ENCODE measurements at regions of chr12 and their contacts with region 1.

Region 1: DNA sequence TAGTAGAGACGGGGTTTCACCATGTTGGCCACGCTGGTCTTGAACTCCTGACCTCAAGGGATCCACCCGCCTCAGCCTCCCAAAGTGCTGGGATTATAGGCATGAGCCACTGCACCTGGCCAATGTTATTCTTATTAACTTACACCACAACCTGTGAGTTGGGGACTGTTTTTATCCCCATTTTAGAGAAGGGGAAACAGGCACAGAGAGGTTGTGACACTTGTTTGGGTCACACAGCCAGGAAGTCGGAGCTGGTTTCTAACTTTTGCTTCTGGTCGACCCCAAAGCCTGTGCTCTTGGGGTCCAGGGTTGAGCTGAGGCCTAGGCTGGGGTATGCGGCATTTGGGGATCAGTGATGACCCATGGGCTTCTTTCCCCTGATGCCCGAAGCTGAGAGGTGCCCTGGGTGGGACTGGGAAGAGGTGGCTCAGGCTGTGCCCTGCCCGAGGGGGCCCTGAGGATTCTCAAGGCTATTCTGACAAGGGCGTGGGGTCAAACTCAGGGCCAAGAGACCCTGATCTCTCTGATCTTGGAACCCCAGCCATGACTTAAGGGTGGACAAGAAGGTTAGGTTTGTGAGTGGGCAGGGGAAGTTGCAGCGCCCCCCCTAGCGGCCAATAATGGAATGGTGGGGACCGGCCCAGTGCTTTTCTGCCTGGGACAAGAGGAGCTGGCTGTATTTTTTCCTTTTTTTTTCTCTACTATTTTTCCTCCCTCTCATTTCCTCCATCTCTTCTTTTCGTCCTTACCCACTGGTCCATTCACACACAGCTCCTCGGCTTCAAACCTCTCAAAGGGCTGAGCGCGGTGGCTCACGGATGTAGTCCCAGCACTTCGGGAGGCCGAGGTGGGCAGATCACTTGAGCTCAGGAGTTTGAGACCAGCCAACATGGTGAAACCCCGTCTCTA is 3.0 kb downstream of the SDSL start:
- DNase-seq: peak; percentile 62
- ATAC-seq: peak; percentile 67
- H3K4me3 Mint-ChIP-seq: no peak overlapping the region
- H3K27ac Mint-ChIP-seq: no peak overlapping the region
- H3K4me1 Mint-ChIP-seq: peaks cover 13% of the 10 kb centered on the region
- H3K27me3 Mint-ChIP-seq: peaks cover 17% of the 10 kb centered on the region

Region 2: GRCh38 chr12:113310489-113310888 is 114.7 kb before region 1 on chr12:
- CTCF ChIA-PET with region 1: interaction called, 10 read pairs
- DNase-seq: no peak
- ATAC-seq: no peak
- H3K4me3 Mint-ChIP-seq: no peak overlapping the region
- H3K27ac Mint-ChIP-seq: no peak overlapping the region
- H3K4me1 Mint-ChIP-seq: no peaks in the 10 kb centered on the region
- H3K27me3 Mint-ChIP-seq: no peaks in the 10 kb centered on the region

Region 3: GRCh38 chr12:113391145-113391544 is 34.0 kb before region 1 on chr12:
- CTCF ChIA-PET with region 1: no interaction called
- DNase-seq: no peak
- ATAC-seq: no peak
- H3K4me3 Mint-ChIP-seq: no peak overlapping the region
- H3K27ac Mint-ChIP-seq: no peak overlapping the region
- H3K4me1 Mint-ChIP-seq: no peaks in the 10 kb centered on the region
- H3K27me3 Mint-ChIP-seq: no peaks in the 10 kb centered on the region

Measured in activated CD8-positive, alpha-beta memory T cell treated with anti-CD3 and anti-CD28 coated beads, Interleukin-2, amount 10 ng/mL, durations not matched to agents 7 days and 5 days (primary cell).